T-cell (primary cell): ENCODE measurements at regions of chr11 and their contacts with region 1.

Region 1: GRCh38 chr11:6705905-6706535 is 22.9 kb upstream of the MRPL17 start:
- DNase-seq: peak in 22 of 35 experiments; percentile 4 to 72 (median 28)
- ATAC-seq: peak; percentile 53 to 71 (median 62)
- H3K4me3 ChIP-seq: no peak overlapping the region
- H3K4me3 Mint-ChIP-seq: no peak overlapping the region
- H3K27ac ChIP-seq: no peak overlapping the region
- H3K27ac Mint-ChIP-seq: peak overlapping the region; percentile 41 to 72
- H3K4me1 ChIP-seq: peaks cover 0 to 2% of the 10 kb centered on the region in 2 experiments
- H3K4me1 Mint-ChIP-seq: peaks cover 24 to 29% (median 29%) of the 10 kb centered on the region in 3 donors
- H3K27me3 ChIP-seq: no peaks in the 10 kb centered on the region
- H3K27me3 Mint-ChIP-seq: no peaks in the 10 kb centered on the region

Region 2: DNA sequence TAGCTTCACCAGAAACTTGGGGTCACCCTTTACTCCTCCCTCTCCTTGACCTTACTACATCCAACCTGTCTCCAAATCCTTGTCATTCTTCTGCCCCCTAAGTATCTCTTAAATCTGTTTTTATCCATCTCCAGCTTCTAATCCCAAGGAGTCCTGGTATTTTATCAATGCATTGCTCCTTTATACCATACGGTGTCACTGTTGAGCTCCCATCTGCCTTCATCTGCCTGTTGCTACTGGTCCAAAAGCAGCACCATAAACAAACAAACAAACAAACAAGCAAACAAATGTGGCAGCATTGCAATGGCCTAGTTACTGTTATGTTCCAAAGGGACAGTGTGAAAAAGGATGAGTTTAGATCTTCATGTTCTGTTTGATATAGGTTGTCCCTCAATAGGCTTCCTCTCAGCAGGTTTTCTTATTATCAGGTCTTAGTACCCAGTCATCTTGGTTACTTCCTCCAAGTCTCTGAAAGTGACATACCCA is 174.7 kb before region 1 on chr11:
- CTCF ChIA-PET with region 1: interaction called, 11 to 26 read pairs
- POLR2A ChIA-PET with region 1: interaction called in 1 of 2 experiments, 3 read pairs
- DNase-seq: peak in 7 of 35 experiments; percentile 3 to 69 (median 12)
- ATAC-seq: peak in 3 of 4 experiments; percentile 47 to 59 (median 57)
- H3K4me3 ChIP-seq: no peak overlapping the region
- H3K4me3 Mint-ChIP-seq: no peak overlapping the region
- H3K27ac ChIP-seq: no peak overlapping the region
- H3K27ac Mint-ChIP-seq: no peak overlapping the region
- H3K4me1 ChIP-seq: peaks cover 1 to 3% of the 10 kb centered on the region in 2 experiments
- H3K4me1 Mint-ChIP-seq: peaks cover 7 to 13% (median 12%) of the 10 kb centered on the region in 3 donors
- H3K27me3 ChIP-seq: no peaks in the 10 kb centered on the region
- H3K27me3 Mint-ChIP-seq: no peaks in the 10 kb centered on the region

Region 3: GRCh38 chr11:6841694-6842093 is 135.7 kb after region 1 on chr11:
- CTCF ChIA-PET with region 1: no interaction called
- POLR2A ChIA-PET with region 1: no interaction called
- DNase-seq: no peak
- ATAC-seq: no peak
- H3K4me3 ChIP-seq: no peak overlapping the region
- H3K4me3 Mint-ChIP-seq: no peak overlapping the region
- H3K27ac ChIP-seq: no peak overlapping the region
- H3K27ac Mint-ChIP-seq: no peak overlapping the region
- H3K4me1 ChIP-seq: no peaks in the 10 kb centered on the region
- H3K4me1 Mint-ChIP-seq: no peaks in the 10 kb centered on the region
- H3K27me3 ChIP-seq: peaks cover 0 to 10% of the 10 kb centered on the region in 2 experiments
- H3K27me3 Mint-ChIP-seq: peaks cover 11 to 36% of the 10 kb centered on the region in 2 donors